HepG2 (cell line): ENCODE measurements at regions of chr5 and their contacts with region 1.

Region 1: DNA sequence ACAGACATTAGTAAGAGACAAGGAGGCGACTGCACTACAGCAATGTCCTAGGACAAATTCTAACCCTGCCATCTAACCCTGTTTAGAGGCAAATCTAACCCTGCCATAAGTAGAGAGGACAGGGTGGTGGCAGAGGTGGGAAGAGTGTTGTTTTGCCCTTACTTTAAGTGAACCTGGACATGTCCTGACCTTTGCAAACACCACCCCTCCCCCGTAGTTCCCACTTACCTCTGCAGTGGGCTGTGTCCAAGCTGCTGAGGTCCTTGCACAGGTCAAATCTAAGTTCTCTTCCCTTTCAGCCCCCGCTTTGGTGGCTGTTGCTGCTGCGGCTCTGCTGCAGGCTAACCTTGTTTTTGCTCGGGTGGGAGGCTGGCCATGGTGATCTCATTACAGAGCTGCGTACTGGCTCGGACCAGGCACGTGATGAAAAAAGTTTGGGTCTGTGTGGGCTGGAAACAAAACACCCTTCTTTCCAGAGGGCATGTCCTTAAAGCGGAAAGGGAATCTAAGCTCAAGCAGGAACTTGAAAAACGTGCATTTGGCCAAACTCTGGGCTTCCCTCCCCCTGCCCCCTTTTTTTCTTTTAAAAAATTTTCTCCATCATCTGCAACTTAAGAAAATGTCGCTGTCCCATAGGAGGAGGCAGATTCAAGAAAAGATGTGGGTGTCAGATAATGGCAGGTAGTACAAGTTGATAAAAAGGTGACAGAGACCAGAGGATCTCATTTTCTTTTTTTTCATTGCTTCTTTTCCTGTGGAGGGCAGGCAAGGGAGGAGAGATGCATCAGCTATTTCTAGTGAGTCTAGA is at the start of gene FAXDC2:
- DNase-seq: peak; percentile 78
- ATAC-seq: peak; percentile 97
- H3K4me3 ChIP-seq: peak within 1 kb of the TSS; percentile 72 to 78 (median 76)
- H3K27ac ChIP-seq: peak within 1 kb of the TSS; percentile 68
- H3K4me1 ChIP-seq: peaks cover 60% of the 10 kb centered on the region
- H3K27me3 ChIP-seq: no peaks in the 10 kb centered on the region
- CTCF ChIP-seq: no peak
- EP300 ChIP-seq: no peak
- POLR2A ChIP-seq: peak in 1 of 2 experiments; percentile 61; a peak in 1 of 4 replicates
- RAD21 ChIP-seq: no peak
- total RNA-seq, gene FAXDC2: 3.0 and 4.7 TPM in 2 replicates

Region 2: DNA sequence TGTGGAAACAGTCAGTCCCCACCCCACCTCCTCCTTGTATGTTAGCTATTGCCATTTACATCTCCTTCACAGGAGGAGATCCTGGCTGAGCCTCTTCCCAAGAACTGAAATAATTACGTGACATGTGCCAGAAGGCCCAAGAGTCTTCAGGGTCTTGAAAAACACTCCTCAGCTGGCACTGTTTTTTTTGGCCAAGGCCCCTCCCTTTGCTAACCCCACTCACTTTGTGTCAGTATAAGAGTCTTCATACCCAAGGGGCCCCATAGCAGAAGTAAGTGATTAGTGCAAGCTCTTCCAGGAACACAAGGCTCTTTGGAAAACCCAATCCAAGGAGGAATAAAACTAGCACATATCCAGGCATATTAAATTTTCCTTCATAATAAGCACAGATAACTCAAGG is 101.0 kb before region 1 on chr5:
- CTCF ChIA-PET with region 1: no interaction called
- POLR2A ChIA-PET with region 1: no interaction called
- in situ Hi-C with region 1: no loop called
- intact Hi-C with region 1: no loop called
- DNase-seq: no peak
- ATAC-seq: no peak
- H3K4me3 ChIP-seq: no peak overlapping the region
- H3K27ac ChIP-seq: no peak overlapping the region
- H3K4me1 ChIP-seq: peaks cover 25% of the 10 kb centered on the region
- H3K27me3 ChIP-seq: no peaks in the 10 kb centered on the region
- CTCF ChIP-seq: no peak
- EP300 ChIP-seq: no peak
- POLR2A ChIP-seq: no peak
- RAD21 ChIP-seq: no peak

Region 3: DNA sequence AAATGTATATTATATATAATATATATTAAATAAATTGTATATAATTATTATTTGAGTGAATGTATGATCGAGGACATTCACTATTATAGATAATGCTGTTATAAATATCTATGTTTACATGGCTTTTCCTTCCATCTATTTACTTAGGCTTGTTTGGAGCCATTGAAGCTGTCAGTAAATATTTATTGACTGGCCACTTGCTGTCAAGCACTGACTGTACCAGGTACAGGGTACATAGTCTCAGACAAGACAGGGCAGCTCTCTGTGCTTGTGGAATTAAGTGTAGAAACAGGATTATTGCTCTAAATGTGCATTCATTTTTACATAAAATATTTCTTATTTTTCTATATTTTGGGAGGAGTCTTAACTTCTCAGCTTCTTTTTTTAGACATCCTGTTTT is 16.4 kb before region 1 on chr5:
- CTCF ChIA-PET with region 1: no interaction called
- POLR2A ChIA-PET with region 1: interaction called, 14 read pairs
- in situ Hi-C with region 1: no loop called
- intact Hi-C with region 1: no loop called
- DNase-seq: peak; percentile 68
- ATAC-seq: peak; percentile 68
- H3K4me3 ChIP-seq: peak overlapping the region in 2 of 3 experiments; percentile 22 to 49; a peak in 2 of 6 replicates
- H3K27ac ChIP-seq: peak overlapping the region; percentile 48
- H3K4me1 ChIP-seq: peaks cover 85% of the 10 kb centered on the region
- H3K27me3 ChIP-seq: no peaks in the 10 kb centered on the region
- CTCF ChIP-seq: no peak
- EP300 ChIP-seq: peak in 1 of 2 experiments; percentile 87; a peak in 2 of 4 replicates
- POLR2A ChIP-seq: no peak
- RAD21 ChIP-seq: no peak